ENCODE measurements at regions of chr6 and their contacts with region 1.

Region 1: GRCh38 chr6:117346142-117346930 is 79.4 kb downstream of the ROS1 start:
- DNase-seq: peak in 1 of 2 experiments; percentile 44
- H3K4me3 ChIP-seq: no peak overlapping the region
- H3K27ac ChIP-seq: no peak overlapping the region
- H3K4me1 ChIP-seq: no peaks in the 10 kb centered on the region
- H3K27me3 ChIP-seq: no peaks in the 10 kb centered on the region
- CTCF ChIP-seq: peak; percentile 89

Region 2: DNA sequence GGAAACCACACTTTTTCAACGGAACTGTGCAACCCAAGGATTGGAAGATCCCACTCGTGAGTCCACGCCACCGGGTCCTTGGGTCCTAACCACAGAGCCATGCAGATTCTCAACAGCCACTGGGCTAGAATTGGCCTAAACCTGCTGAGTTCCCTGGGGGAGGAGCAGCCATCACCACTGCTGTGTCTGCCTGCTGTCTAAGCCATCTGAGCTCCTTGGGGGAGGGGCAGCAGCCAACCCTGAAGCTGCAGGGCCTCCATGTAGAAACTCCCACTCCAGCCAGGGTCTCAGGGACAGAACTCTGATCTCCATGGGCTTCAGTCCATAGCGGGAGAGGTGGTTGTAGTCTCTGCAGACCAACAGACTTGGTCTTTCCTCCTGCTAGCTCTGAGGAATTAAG is 235.6 kb before region 1 on chr6:
- CTCF ChIA-PET with region 1: no interaction called
- POLR2A ChIA-PET with region 1: no interaction called
- intact Hi-C with region 1: no loop called
- DNase-seq: no peak
- H3K4me3 ChIP-seq: no peak overlapping the region
- H3K27ac ChIP-seq: no peak overlapping the region
- H3K4me1 ChIP-seq: no peaks in the 10 kb centered on the region
- H3K27me3 ChIP-seq: no peaks in the 10 kb centered on the region
- CTCF ChIP-seq: no peak

Region 3: DNA sequence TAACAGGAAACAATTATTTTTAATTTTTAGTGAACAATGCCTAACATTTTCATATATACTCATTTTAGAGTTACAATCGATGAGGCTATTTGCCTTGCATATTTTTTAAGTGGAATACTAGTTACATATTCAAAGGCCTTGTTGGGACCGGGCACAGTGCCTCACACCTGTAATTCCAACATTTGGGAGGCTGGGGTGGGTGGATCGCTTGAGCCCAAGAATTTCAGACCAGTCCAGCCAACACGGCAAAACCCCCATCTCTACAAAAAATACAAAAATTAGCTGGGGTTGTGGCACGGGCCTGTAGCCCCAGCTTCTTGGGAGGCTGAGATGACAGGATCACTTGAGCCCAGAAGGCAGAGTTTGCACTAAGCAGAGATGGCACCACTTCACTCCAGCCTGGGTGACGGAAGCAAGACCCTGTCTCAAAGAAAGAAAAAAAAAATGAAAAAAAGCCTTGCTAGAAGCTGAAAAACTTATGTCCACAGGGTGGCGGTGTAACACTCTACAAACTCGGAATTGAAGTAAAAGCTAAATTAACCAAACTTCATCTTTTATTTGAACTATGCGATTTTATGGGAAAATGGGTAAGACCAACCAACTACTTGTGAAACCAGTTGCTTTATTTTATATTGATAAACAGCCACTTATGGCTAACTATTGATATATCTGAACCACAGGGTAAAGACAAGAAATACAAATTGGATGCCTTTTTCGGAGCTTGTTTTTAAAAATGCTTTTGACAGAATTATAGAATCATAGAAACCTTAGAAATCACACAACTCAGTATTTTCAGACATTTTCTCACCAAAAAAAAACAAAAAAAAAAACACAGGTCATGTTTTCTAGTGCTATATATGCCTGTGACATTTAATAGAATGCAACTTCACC is 103.5 kb after region 1 on chr6:
- CTCF ChIA-PET with region 1: no interaction called
- POLR2A ChIA-PET with region 1: no interaction called
- intact Hi-C with region 1: loop called (anchors 5 kb)
- DNase-seq: peak; percentile 40 to 70
- H3K4me3 ChIP-seq: no peak overlapping the region
- H3K27ac ChIP-seq: peak overlapping the region; percentile 49; the same call in 1 of the 2 replicates
- H3K4me1 ChIP-seq: peaks cover 41% of the 10 kb centered on the region
- H3K27me3 ChIP-seq: no peaks in the 10 kb centered on the region
- CTCF ChIP-seq: peak; percentile 95

Region 4: DNA sequence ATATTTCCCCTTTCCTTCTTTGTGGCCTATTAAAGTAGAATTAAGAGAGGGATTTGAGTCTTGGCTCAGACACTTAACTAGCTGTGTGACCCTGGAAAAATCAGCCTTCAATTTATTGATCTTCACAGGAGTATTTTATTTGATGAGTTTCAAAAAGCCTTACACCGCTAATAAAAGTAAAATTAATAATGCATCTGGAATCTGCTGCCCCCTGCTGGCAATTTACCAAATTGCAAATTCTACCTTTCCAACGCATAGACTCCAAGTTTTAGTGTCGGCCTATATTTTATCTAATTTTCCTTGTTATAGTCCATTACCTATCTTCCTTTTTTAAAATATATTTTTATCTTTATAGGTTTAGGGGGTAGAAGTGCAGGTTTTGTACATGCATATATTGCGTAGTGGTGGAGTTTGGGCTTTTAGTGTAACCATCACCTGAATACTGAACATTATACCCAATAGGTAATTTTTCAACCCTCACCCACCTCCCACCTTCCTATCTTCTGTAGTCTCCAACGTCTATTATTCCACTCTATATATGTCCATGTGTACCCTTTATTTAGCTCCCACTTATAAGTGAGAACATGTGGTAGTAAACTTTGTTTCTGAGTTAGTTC is 209.7 kb after region 1 on chr6:
- CTCF ChIA-PET with region 1: no interaction called
- POLR2A ChIA-PET with region 1: no interaction called
- intact Hi-C with region 1: loop called (anchors 2 kb)
- DNase-seq: peak in 1 of 2 experiments; percentile 41
- H3K4me3 ChIP-seq: no peak overlapping the region
- H3K27ac ChIP-seq: no peak overlapping the region
- H3K4me1 ChIP-seq: peaks cover 10% of the 10 kb centered on the region
- H3K27me3 ChIP-seq: no peaks in the 10 kb centered on the region
- CTCF ChIP-seq: peak; percentile 97

Region 5: DNA sequence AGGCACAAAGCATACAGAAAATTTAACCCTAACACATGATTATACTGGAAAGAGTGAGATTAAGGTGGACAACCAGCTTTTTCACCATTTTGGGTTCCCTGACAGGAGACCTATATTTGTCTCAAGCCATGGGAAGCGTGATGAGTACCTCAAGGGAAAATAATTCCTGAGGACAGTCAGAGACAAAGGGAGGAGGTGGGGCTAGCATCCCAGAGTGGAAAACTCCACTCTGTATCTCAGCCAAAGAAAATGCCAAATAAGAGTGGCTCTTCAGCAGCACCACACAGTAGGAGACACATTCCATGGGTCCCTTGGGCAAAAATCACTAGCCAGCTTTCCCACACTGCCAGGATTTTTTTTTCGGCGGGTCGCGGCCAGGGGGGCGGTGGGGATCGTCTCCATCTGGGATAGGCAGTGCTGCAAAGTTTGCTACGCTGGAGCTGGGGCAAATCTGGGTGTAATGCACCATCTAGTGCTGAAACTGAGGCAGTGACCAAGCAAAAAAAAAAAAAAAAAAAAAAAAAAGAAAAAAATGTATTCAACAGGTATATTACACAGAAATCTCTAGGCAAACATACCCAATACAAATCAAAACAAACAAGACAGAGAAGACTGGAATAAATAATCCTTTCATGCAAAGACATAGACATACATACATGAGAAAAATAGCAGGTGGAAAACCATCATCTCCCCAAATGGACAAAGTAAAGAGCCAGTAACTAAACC is 483.4 kb after region 1 on chr6:
- CTCF ChIA-PET with region 1: no interaction called
- POLR2A ChIA-PET with region 1: no interaction called
- intact Hi-C with region 1: loop called (anchors 2 kb)
- DNase-seq: peak in 1 of 2 experiments; percentile 7
- H3K4me3 ChIP-seq: peak overlapping the region; percentile 48; the same call in 1 of the 2 replicates
- H3K27ac ChIP-seq: no peak overlapping the region
- H3K4me1 ChIP-seq: no peaks in the 10 kb centered on the region
- H3K27me3 ChIP-seq: no peaks in the 10 kb centered on the region
- CTCF ChIP-seq: peak; percentile 75

Region 6: DNA sequence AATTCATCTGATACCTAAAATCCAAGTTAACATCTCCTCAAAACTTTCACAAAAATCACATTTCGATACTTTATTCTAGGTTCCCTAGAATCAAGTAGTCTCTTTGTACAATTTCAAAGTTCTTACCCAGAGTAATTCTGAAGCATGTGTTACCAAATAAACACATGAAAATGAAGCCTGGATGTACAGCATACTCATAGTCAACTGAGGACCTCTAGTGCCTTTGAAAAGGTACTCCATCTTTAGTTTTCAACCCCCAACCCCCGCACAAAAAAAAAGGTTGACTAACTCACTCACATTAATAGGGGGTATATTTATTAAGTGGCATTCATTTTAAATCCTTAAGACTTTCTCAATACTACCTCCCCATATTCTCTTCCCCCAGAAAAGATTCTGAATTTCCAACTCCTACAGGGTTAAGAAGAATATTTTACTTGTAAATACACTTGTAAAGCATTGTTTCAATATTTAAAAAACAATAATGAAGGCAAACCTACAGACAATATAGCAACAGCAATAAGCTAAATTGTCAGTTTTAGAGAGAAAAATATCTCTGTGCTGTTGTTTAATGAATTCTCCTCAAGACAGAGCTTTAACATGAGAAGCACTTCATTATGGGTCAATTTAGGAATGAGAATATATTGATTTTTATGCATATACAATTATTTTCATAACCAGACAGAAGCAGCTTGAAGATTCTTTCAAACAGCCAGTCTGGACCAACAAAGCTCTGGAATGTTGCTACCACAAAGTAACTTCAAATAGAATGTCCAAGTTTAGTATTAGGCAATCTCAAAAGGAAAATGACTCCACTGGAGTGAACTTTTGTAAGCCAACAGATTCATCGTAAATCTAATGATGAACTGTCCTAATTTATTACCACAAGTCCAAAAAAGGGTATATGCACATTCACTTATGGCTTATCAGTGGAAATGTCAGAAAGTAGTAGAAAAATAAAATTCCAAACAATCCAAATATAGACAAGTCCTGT is 1205.0 kb after region 1 on chr6:
- CTCF ChIA-PET with region 1: no interaction called
- POLR2A ChIA-PET with region 1: no interaction called
- intact Hi-C with region 1: loop called (anchors 10 kb)
- DNase-seq: peak; percentile 10 to 51
- H3K4me3 ChIP-seq: no peak overlapping the region
- H3K27ac ChIP-seq: no peak overlapping the region
- H3K4me1 ChIP-seq: no peaks in the 10 kb centered on the region
- H3K27me3 ChIP-seq: no peaks in the 10 kb centered on the region
- CTCF ChIP-seq: peak; percentile 88

Region 7: DNA sequence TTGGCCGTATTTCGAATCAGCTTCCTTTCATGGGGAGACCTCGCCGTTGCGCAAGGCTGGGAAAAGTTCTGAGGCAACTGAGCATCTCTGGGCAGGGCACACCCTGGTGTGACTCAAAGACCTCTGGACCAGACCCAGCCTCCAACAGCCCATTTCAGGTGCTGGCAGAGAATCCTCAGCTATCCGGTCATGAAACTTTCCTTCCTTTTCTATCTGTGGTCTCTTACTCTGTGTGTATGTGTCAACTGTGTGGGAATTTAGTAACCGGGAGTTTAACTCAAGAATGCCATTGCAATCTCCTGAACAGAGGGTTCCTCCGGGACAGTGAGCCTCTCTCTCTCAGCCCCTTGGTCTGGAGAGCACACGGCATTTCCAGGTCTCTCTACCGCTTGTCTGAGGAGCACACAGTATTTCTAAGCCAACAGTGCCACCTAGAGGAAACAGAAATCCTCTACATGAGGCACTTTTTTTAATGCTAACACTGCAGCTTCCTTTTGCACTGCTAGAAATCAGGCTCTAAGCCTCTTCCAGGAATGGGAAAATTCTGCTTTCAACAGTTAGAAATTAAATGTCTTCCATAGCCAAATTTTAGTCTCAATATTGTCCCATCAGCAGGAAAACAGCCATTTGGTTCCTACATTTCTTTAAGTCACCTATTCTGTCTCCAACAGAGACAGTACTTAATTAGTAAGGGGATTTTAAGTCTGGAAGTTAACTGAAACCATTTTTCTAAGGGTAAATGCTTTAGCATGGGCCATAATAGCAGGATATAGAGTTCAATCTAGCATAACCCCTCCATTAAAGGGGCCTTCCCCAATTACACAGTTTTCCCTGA is 1234.5 kb after region 1 on chr6:
- CTCF ChIA-PET with region 1: no interaction called
- POLR2A ChIA-PET with region 1: no interaction called
- intact Hi-C with region 1: loop called (anchors 10 kb)
- DNase-seq: no peak
- H3K4me3 ChIP-seq: no peak overlapping the region
- H3K27ac ChIP-seq: no peak overlapping the region
- H3K4me1 ChIP-seq: no peaks in the 10 kb centered on the region
- H3K27me3 ChIP-seq: no peaks in the 10 kb centered on the region
- CTCF ChIP-seq: peak; percentile 79

Measured in PC-9 (cell line).